Tibial artery (tissue), 4 donors: ENCODE measurements at regions of chr11 and their contacts with region 1.

Region 1: DNA sequence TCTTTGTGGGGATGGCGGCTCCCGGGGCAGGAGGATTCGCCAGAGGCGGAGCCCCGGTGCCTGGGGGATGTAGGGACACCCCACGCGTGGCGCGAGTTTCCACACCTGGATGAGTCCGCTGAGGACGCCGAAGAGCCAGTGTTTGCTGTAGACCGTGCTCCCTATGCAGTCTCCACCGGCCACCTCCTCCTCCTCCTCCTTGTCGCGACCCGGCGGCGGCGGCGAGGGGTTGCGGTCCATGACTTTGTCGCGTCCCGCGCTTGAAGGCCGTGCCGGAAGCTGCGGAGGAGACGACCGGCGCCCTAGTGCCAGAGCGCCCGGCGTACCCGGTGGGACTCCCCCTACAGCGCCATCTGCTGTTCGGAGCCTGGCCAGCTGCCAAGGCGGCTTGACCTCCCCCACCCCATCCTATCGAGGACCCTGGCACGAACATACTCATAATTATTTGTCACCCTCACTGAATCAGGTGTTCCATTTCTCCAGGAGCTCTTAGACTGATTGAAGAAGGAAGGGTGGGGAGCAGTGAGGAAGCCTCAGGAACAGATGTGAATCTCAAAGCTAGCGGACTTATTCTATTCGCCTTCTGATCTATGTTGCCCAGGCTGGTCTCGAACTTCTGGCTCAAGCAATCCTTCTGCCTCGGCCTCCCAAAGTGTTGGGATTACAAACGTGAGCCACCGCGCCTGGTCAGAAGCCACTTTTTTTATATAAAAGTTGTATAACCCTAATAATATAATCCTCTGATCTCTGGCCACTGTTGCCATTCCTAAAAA is at the start of gene SAAL1:
- DNase-seq: peak; percentile 71 to 89
- H3K4me3 ChIP-seq: peak within 1 kb of the TSS; percentile 91 to 98
- H3K27ac ChIP-seq: peak within 1 kb of the TSS; percentile 68 to 77
- H3K4me1 ChIP-seq: peaks cover 0 to 19% (median 9%) of the 10 kb centered on the region in 4 donors
- H3K27me3 ChIP-seq: no peaks in the 10 kb centered on the region
- CTCF ChIP-seq: peak; percentile 49 to 58

Region 2: DNA sequence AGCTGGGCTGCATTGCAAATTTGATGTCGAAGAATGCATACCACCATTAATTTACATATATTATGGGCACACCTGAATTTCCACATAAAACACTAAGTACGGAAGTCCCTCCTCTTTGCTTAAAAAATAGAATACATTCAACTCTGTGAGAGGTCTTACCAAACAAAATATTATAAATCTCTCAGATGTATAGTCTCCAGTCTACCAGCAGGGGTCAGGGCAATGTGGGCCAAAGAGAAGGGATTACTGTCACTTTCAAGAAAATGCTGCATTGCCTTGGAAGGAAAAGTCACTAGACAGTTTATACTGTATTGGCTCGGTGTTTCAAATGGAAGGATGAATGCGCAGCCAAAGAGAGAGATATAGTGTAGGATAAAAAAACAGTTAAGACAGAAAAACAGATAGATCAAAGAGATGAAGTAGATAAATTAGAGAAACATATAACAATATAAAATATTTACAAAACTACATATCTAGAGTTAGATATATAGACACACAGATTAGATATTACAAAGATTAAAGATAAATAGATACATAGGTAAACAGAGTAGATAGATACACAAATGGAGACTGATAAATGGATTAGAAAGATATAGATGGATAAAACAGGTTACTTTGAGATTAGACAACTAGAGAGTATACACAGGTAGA is 114.1 kb before region 1 on chr11:
- intact Hi-C with region 1: loop called (anchors 5 kb)
- DNase-seq: no peak
- H3K4me3 ChIP-seq: no peak overlapping the region
- H3K27ac ChIP-seq: no peak overlapping the region
- H3K4me1 ChIP-seq: no peaks in the 10 kb centered on the region
- H3K27me3 ChIP-seq: no peaks in the 10 kb centered on the region
- CTCF ChIP-seq: peak; percentile 68 to 78

Region 3: DNA sequence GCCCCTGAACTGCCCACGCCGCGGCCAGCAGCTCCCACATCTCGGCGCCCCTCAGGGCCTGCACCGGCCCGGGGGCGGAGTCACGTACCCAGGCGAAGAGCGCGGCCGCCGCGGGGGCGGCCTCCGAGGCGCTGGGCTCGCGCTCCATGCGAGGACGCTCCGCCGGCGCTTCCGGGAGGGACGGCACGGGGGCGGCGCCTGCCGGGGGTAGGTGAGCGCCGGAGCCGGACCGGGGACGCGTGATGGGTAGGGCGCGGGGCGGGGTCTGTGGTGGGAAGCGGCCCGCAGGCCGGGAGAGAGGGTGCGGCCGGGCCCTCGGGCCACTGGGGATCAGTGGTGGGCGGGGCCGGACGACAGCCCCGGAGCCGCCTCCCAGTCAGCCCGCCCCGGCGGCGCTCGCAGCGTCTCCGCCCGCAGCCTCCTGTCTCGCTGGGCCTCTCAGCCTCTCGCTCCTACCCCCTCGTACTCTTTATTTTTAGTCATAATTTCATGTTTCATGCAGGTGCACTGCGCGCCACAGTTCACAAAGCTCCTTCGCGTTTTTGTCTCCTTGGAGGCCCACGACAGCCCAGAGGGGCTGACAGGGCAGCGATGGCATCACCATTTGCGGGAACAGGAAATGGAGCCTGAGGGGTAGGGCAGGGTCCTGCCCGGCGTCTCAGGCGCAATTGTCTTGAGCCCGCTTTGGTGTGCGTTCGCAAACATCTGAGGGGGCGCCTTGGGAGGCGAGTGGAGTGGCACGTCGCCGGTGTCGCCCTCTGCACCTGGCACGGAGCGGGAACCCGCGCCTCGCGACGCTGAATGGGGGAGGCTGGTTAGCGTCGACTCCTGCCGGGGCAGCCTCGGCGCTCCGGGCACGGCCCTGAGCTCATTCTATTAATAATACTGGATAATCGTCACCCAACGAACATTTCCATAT is 92.9 kb before region 1 on chr11 and contains the start of gene SERGEF:
- intact Hi-C with region 1: loop called (anchors 5 kb)
- DNase-seq: peak; percentile 95 to 96
- H3K4me3 ChIP-seq: peak within 1 kb of the TSS; percentile 78 to 84
- H3K27ac ChIP-seq: peak within 1 kb of the TSS; percentile 90 to 97
- H3K4me1 ChIP-seq: peaks cover 0 to 15% (median 8%) of the 10 kb centered on the region in 4 donors
- H3K27me3 ChIP-seq: no peaks in the 10 kb centered on the region
- CTCF ChIP-seq: no peak

Region 4: DNA sequence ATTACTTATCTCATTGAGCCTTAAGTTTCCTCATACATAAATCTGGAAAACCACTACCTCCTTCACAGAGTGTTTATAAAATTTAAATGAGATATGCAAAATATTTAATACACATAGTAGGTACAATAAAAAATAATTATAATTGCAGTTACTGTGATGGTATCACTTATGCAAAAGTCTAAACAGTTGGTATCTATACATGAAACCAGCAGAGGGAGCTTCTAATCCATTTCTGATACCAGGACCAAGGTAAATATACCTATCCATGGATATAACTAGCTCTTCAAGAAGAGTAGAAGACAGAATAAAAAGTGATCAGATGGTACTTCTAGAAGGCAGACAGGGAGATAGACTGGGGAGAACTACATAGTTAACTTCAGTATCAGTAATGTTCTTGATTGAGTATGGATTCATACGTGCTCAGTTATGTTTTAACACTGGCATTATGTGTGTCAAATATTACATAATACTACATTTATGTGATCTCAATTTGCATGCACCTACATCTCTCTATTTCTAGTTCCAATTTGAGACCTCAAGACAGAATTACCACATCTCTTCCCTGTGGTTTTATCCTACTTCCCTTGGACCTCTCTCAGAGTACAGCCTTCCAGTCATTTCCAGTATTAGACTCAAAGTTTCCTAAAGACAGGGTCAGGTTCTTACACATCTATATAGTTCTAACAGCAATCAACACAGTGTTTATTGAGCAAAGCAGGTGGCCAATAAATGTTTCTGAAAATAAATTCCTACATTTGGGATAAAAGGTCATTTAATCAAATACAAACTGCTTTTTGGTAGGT is 434.4 kb after region 1 on chr11:
- intact Hi-C with region 1: no loop called
- DNase-seq: no peak
- H3K4me3 ChIP-seq: no peak overlapping the region
- H3K27ac ChIP-seq: no peak overlapping the region
- H3K4me1 ChIP-seq: no peaks in the 10 kb centered on the region
- H3K27me3 ChIP-seq: no peaks in the 10 kb centered on the region
- CTCF ChIP-seq: no peak